Activated CD8-positive, alpha-beta T cell treated with anti-CD3 and anti-CD28 coated beads for 36 hours (primary cell): ENCODE measurements at regions of chr7 and their contacts with region 1.

Region 1: GRCh38 chr7:143008007-143008901 is 18.7 kb downstream of the OR9A2 start:
- DNase-seq: peak; percentile 89
- ATAC-seq: peak; percentile 98
- H3K4me3 Mint-ChIP-seq: no peak overlapping the region
- H3K27ac Mint-ChIP-seq: no peak overlapping the region
- H3K4me1 Mint-ChIP-seq: peaks cover 5% of the 10 kb centered on the region
- H3K27me3 Mint-ChIP-seq: peaks cover 5% of the 10 kb centered on the region
- CTCF ChIP-seq: peak; percentile 92

Region 2: GRCh38 chr7:142853739-142854371 is 154.4 kb before region 1 on chr7:
- CTCF ChIA-PET with region 1: interaction called, 33 read pairs
- POLR2A ChIA-PET with region 1: interaction called, 3 read pairs
- intact Hi-C with region 1: no loop called
- DNase-seq: peak; percentile 77
- ATAC-seq: peak; percentile 81
- H3K4me3 Mint-ChIP-seq: peak overlapping the region; percentile 95
- H3K27ac Mint-ChIP-seq: peak overlapping the region; percentile 82
- H3K4me1 Mint-ChIP-seq: peaks cover 6% of the 10 kb centered on the region
- H3K27me3 Mint-ChIP-seq: no peaks in the 10 kb centered on the region
- CTCF ChIP-seq: peak; percentile 92

Region 3: GRCh38 chr7:142873281-142873787 is 134.9 kb before region 1 on chr7:
- CTCF ChIA-PET with region 1: interaction called, 55 read pairs
- POLR2A ChIA-PET with region 1: no interaction called
- intact Hi-C with region 1: no loop called
- DNase-seq: peak; percentile 58
- ATAC-seq: peak; percentile 91
- H3K4me3 Mint-ChIP-seq: no peak overlapping the region
- H3K27ac Mint-ChIP-seq: no peak overlapping the region
- H3K4me1 Mint-ChIP-seq: no peaks in the 10 kb centered on the region
- H3K27me3 Mint-ChIP-seq: no peaks in the 10 kb centered on the region
- CTCF ChIP-seq: peak; percentile 69

Region 4: DNA sequence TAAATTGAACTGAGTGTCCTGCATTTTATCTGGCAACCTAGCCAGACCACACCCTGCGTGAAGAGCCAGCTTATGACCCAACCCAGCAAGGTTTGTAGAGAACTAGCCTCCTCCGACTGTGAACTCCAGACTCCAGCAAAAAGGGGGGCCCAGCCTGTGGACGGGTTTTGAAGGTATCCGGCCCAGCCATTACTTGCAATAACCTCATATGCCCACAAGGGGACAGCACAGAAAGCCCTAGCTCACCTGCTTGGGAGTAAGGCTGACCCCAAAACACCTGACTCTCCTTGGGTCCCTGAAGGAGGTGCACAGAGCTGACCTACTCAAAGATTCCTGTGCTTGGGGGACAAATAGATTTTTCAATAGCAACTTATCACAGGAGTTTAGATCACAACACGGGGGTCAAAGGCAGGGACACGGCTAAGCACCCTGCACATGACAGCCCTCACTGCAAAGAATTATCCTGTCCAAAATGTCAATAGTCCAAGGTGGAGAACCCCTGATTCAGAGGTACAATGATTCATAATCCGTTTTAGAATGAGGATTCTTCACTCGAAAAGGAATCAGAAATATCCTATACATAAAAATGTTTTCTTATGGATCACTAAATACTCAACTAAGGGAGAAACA is 127.3 kb before region 1 on chr7:
- CTCF ChIA-PET with region 1: interaction called, 55 read pairs
- POLR2A ChIA-PET with region 1: no interaction called
- intact Hi-C with region 1: loop called (anchors 2 kb)
- DNase-seq: peak; percentile 67
- ATAC-seq: peak; percentile 94
- H3K4me3 Mint-ChIP-seq: no peak overlapping the region
- H3K27ac Mint-ChIP-seq: no peak overlapping the region
- H3K4me1 Mint-ChIP-seq: no peaks in the 10 kb centered on the region
- H3K27me3 Mint-ChIP-seq: no peaks in the 10 kb centered on the region
- CTCF ChIP-seq: peak; percentile 90

Region 5: DNA sequence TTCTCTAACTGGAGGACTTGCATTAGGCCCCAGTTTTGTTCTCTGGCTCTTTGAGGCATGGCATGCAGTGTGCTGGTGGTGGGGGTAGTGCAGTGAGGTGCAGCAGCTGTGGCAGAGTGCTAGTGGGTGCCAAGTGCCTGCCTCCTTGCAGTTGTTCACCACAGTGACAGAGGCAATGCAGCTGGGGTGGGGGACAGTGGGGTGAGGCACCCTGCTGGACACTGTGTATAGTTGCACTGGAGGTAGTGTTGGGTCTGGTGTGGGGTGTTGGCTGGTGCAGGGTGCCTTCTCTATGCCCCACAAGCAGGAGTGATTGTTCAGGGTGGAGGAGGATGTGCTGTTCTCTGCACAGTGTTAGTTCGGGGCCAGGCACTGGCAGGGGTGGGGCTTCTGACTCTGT is 24.4 kb before region 1 on chr7:
- CTCF ChIA-PET with region 1: interaction called, 13 read pairs
- POLR2A ChIA-PET with region 1: no interaction called
- intact Hi-C with region 1: no loop called
- DNase-seq: no peak
- ATAC-seq: no peak
- H3K4me3 Mint-ChIP-seq: no peak overlapping the region
- H3K27ac Mint-ChIP-seq: no peak overlapping the region
- H3K4me1 Mint-ChIP-seq: no peaks in the 10 kb centered on the region
- H3K27me3 Mint-ChIP-seq: peaks cover 12% of the 10 kb centered on the region
- CTCF ChIP-seq: no peak

Region 6: GRCh38 chr7:142992464-142992863 is 15.8 kb before region 1 on chr7:
- CTCF ChIA-PET with region 1: interaction called, 34 read pairs
- POLR2A ChIA-PET with region 1: interaction called, 3 read pairs
- intact Hi-C with region 1: no loop called
- DNase-seq: no peak
- ATAC-seq: no peak
- H3K4me3 Mint-ChIP-seq: no peak overlapping the region
- H3K27ac Mint-ChIP-seq: no peak overlapping the region
- H3K4me1 Mint-ChIP-seq: no peaks in the 10 kb centered on the region
- H3K27me3 Mint-ChIP-seq: peaks cover 6% of the 10 kb centered on the region
- CTCF ChIP-seq: no peak

Region 7: GRCh38 chr7:143316492-143316891 is 308.2 kb after region 1 on chr7:
- CTCF ChIA-PET with region 1: no interaction called
- POLR2A ChIA-PET with region 1: no interaction called
- intact Hi-C with region 1: no loop called
- DNase-seq: no peak
- ATAC-seq: no peak
- H3K4me3 Mint-ChIP-seq: no peak overlapping the region
- H3K27ac Mint-ChIP-seq: no peak overlapping the region
- H3K4me1 Mint-ChIP-seq: no peaks in the 10 kb centered on the region
- H3K27me3 Mint-ChIP-seq: no peaks in the 10 kb centered on the region
- CTCF ChIP-seq: no peak